Mammary epithelial cell (primary cell): ENCODE measurements at regions of chr20 and their contacts with region 1.

Region 1: GRCh38 chr20:3276680-3277015 is 37.7 kb upstream of the SLC4A11 start:
- DNase-seq: peak; percentile 5
- H3K4me3 ChIP-seq: no peak overlapping the region
- H3K27ac ChIP-seq: no peak overlapping the region
- H3K4me1 ChIP-seq: no peaks in the 10 kb centered on the region
- H3K27me3 ChIP-seq: no peaks in the 10 kb centered on the region
- CTCF ChIP-seq: peak; percentile 22 to 32

Region 2: GRCh38 chr20:3218307-3218988 is 58.2 kb before region 1 on chr20:
- CTCF ChIA-PET with region 1: no interaction called
- dilution Hi-C with region 1: no loop called
- in situ Hi-C with region 1: no loop called
- intact Hi-C with region 1: loop called (anchors 1 kb)
- DNase-seq: peak; percentile 12
- H3K4me3 ChIP-seq: no peak overlapping the region
- H3K27ac ChIP-seq: no peak overlapping the region
- H3K4me1 ChIP-seq: peaks cover 13% of the 10 kb centered on the region
- H3K27me3 ChIP-seq: no peaks in the 10 kb centered on the region
- CTCF ChIP-seq: peak; percentile 72 to 87

Region 3: DNA sequence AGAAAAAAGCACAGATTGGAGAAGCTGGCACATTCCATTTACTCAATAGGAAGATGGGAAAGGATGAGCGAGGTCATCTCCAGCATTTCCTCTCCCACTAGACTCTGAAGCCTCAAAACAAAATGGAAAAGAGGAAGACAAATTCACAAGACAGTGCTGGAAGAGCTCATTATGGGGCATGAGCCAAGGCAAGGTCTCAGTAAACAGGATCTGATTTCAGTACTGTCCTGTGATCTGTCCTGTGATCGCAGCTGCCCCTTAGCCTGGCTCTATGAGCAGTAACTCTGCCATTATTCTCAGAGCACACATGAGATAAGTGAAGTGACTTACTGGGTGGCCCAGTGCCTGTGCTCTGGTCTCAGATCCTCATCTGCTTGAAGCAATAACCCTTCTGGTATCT is 30.4 kb after region 1 on chr20:
- CTCF ChIA-PET with region 1: no interaction called
- dilution Hi-C with region 1: loop called (anchors 5 kb)
- in situ Hi-C with region 1: no loop called
- intact Hi-C with region 1: no loop called
- DNase-seq: no peak
- H3K4me3 ChIP-seq: no peak overlapping the region
- H3K27ac ChIP-seq: no peak overlapping the region
- H3K4me1 ChIP-seq: no peaks in the 10 kb centered on the region
- H3K27me3 ChIP-seq: no peaks in the 10 kb centered on the region
- CTCF ChIP-seq: no peak

Region 4: DNA sequence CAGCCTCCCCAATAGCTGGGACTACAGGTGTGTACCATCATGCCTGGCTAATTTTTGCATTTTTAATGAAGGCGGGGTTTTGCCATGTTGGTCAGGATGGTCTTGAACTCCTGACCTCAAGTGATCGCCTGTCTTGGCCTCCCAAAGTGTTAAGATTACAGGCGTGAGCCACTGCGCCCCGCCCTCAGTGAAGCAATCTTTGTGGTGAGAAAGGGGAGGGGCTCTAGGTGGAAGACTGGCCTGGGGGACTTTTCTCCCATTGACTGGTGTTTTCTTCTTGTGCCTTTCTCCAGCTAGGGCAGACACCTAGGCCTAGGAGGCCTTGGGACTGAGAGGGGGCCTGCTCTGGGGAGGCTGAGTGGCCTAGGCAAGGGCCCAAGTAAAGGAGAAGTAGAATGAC is 46.8 kb after region 1 on chr20:
- CTCF ChIA-PET with region 1: no interaction called
- dilution Hi-C with region 1: no loop called
- in situ Hi-C with region 1: no loop called
- intact Hi-C with region 1: no loop called
- DNase-seq: peak; percentile 52
- H3K4me3 ChIP-seq: no peak overlapping the region
- H3K27ac ChIP-seq: no peak overlapping the region
- H3K4me1 ChIP-seq: peaks cover 7% of the 10 kb centered on the region
- H3K27me3 ChIP-seq: no peaks in the 10 kb centered on the region
- CTCF ChIP-seq: no peak

Region 5: GRCh38 chr20:3339076-3339475 is 62.4 kb after region 1 on chr20:
- CTCF ChIA-PET with region 1: no interaction called
- dilution Hi-C with region 1: loop called (anchors 5 kb)
- in situ Hi-C with region 1: no loop called
- intact Hi-C with region 1: no loop called
- DNase-seq: no peak
- H3K4me3 ChIP-seq: no peak overlapping the region
- H3K27ac ChIP-seq: no peak overlapping the region
- H3K4me1 ChIP-seq: no peaks in the 10 kb centered on the region
- H3K27me3 ChIP-seq: no peaks in the 10 kb centered on the region
- CTCF ChIP-seq: no peak

Region 6: GRCh38 chr20:3398681-3399252 is 122.1 kb after region 1 on chr20:
- CTCF ChIA-PET with region 1: no interaction called
- dilution Hi-C with region 1: no loop called
- in situ Hi-C with region 1: no loop called
- intact Hi-C with region 1: no loop called
- DNase-seq: no peak
- H3K4me3 ChIP-seq: no peak overlapping the region
- H3K27ac ChIP-seq: no peak overlapping the region
- H3K4me1 ChIP-seq: no peaks in the 10 kb centered on the region
- H3K27me3 ChIP-seq: no peaks in the 10 kb centered on the region
- CTCF ChIP-seq: no peak